T-cell (primary cell): ENCODE measurements at regions of chr1 and their contacts with region 1.

Region 1: DNA sequence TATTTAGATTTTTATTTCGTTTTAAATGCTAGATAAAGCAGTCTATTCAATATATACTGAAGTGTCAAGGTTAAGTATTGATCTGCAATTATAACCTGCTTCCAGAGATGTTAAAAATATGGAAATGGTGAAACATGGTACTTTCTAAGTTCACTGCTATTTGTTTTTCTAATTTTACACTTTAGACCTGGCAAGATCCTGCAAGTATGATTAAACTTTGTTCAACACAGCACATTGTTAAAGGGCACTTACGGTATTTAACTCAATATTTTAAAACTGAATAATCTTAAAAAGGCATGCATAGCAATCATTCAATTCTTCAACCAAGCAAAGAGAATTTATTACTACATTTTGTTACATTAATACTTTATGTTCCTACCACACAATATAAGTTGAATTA is 35.7 kb upstream of the ZZZ3 start:
- DNase-seq: no peak
- ATAC-seq: no peak
- H3K4me3 ChIP-seq: no peak overlapping the region
- H3K4me3 Mint-ChIP-seq: no peak overlapping the region
- H3K27ac ChIP-seq: no peak overlapping the region
- H3K27ac Mint-ChIP-seq: no peak overlapping the region
- H3K4me1 ChIP-seq: no peaks in the 10 kb centered on the region
- H3K4me1 Mint-ChIP-seq: no peaks in the 10 kb centered on the region
- H3K27me3 ChIP-seq: no peaks in the 10 kb centered on the region
- H3K27me3 Mint-ChIP-seq: no peaks in the 10 kb centered on the region

Region 2: DNA sequence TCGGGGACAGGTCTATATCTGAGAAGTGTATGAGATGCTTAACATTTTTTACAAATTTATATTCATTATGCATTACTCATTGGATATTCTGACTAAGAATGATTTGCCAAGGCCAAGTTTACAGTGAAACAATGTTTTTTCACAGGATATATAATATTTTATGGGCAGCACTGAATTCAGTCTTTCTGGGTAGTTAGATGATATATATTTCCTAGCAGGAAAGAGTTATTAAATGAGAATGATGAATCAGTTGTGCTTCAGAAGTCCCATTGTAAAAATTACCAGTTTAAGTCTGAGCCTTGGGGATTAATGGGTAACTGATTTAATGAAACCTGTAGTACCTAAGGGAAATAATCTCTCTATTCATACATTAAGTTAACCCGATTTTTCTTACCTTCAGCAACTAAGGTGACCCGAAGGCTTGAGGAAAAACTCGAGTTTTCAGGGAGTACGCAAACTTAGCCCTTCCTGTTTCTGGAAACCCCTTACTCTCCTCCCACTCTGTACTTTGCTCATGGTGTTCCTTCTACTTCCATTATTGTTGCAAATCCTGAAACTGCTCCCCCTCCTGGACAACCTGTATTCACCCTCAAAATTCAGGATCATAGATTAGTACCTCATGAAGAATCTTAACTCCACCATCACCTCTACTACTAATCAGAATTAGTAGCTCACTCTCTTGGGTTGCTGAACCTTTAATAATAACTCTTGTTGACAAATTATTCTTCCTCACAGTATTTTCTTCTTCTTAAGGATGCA is 301.3 kb before region 1 on chr1:
- CTCF ChIA-PET with region 1: no interaction called
- POLR2A ChIA-PET with region 1: no interaction called
- DNase-seq: no peak
- ATAC-seq: no peak
- H3K4me3 ChIP-seq: no peak overlapping the region
- H3K4me3 Mint-ChIP-seq: no peak overlapping the region
- H3K27ac ChIP-seq: no peak overlapping the region
- H3K27ac Mint-ChIP-seq: no peak overlapping the region
- H3K4me1 ChIP-seq: peaks cover 16 to 26% of the 10 kb centered on the region in 2 experiments
- H3K4me1 Mint-ChIP-seq: peaks cover 57 to 61% (median 59%) of the 10 kb centered on the region in 3 donors
- H3K27me3 ChIP-seq: peaks cover 0 to 2% of the 10 kb centered on the region in 2 experiments
- H3K27me3 Mint-ChIP-seq: peaks cover 3 to 11% of the 10 kb centered on the region in 2 donors

Region 3: DNA sequence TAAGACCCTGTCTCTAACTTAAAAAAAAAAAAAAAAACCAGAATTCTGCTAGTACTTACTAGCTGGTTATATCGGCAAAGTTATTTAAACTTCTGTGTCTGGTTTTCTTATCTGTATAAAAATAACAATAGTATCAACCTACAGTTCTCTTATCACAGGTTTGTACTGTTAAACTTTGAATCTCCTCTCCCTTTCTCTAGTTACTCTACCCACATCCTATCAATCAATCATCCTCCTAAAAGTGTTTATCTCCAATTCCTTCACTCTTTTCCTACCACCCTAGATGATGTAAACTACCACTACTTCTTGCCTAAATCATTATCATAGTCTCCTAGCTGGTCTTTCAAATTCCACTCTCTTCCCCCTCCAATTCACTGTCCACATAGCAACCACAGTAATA is 13.9 kb after region 1 on chr1:
- CTCF ChIA-PET with region 1: no interaction called
- POLR2A ChIA-PET with region 1: interaction called in 1 of 2 experiments, 10 read pairs
- DNase-seq: no peak
- ATAC-seq: no peak
- H3K4me3 ChIP-seq: no peak overlapping the region
- H3K4me3 Mint-ChIP-seq: no peak overlapping the region
- H3K27ac ChIP-seq: no peak overlapping the region
- H3K27ac Mint-ChIP-seq: no peak overlapping the region
- H3K4me1 ChIP-seq: no peaks in the 10 kb centered on the region
- H3K4me1 Mint-ChIP-seq: no peaks in the 10 kb centered on the region
- H3K27me3 ChIP-seq: no peaks in the 10 kb centered on the region
- H3K27me3 Mint-ChIP-seq: no peaks in the 10 kb centered on the region

Region 4: DNA sequence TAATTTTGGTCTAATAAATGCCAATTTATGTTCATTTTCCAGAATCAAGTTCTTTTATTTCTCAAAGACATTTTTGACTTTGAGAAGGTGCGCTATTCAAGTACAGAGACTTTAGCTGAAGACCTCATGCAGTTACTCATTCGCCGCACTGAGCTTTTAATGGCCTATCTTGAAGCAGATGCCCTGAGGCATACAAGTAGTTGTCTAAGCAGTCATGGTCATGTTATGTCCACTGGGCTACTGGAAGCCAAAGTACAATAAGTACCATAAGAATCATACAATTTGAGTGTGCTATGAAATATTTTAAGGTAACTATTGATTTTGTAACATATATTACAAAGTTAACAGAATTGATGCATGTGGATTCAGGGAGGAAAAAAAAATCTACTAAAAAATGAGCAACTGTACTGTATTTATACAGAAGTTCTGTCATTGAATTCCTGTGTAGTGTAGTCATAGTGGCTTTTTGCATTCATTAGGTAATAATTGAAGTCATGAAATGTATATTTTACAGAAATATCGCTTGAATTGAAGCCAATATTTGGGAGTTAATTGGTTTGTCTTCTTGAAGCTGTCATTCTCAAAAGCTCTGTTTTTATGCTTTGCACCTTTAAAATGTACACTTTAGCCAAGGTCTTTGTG is 156.7 kb after region 1 on chr1:
- CTCF ChIA-PET with region 1: no interaction called
- POLR2A ChIA-PET with region 1: no interaction called
- DNase-seq: no peak
- ATAC-seq: no peak
- H3K4me3 ChIP-seq: no peak overlapping the region
- H3K4me3 Mint-ChIP-seq: no peak overlapping the region
- H3K27ac ChIP-seq: no peak overlapping the region
- H3K27ac Mint-ChIP-seq: no peak overlapping the region
- H3K4me1 ChIP-seq: no peaks in the 10 kb centered on the region
- H3K4me1 Mint-ChIP-seq: no peaks in the 10 kb centered on the region
- H3K27me3 ChIP-seq: no peaks in the 10 kb centered on the region
- H3K27me3 Mint-ChIP-seq: no peaks in the 10 kb centered on the region

Region 5: DNA sequence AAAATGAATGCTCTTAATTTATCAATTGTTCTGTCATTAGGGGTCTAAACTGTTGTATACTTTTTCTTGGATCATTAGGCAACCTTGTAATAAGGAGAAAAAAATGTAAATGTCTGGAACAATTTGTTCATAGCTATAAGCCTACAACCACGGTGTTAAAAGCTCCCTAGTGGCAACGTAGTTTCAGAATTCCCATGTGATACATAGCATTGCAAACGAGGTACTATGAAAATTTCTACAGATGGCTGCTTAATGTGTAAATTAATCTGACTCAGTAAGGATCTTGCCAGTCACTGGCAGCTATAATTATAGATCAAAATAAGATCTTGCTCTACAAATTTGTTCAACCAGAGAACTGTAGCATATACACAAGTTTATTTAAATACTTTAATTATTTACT is 1592.4 kb after region 1 on chr1:
- CTCF ChIA-PET with region 1: no interaction called
- POLR2A ChIA-PET with region 1: no interaction called
- DNase-seq: no peak
- ATAC-seq: no peak
- H3K4me3 ChIP-seq: no peak overlapping the region
- H3K4me3 Mint-ChIP-seq: no peak overlapping the region
- H3K27ac ChIP-seq: no peak overlapping the region
- H3K27ac Mint-ChIP-seq: no peak overlapping the region
- H3K4me1 ChIP-seq: no peaks in the 10 kb centered on the region
- H3K4me1 Mint-ChIP-seq: no peaks in the 10 kb centered on the region
- H3K27me3 ChIP-seq: no peaks in the 10 kb centered on the region
- H3K27me3 Mint-ChIP-seq: no peaks in the 10 kb centered on the region